ENCODE measurements at regions of chr6 and their contacts with region 1.

Region 1: GRCh38 chr6:27753668-27754407 is 158.4 kb downstream of the OR2B2 start:
- DNase-seq: peak; percentile 65
- H3K4me3 Mint-ChIP-seq: peak overlapping the region; percentile 83
- H3K27ac Mint-ChIP-seq: peak overlapping the region; percentile 69
- H3K4me1 Mint-ChIP-seq: peaks cover 56% of the 10 kb centered on the region
- H3K27me3 Mint-ChIP-seq: peaks cover 2% of the 10 kb centered on the region

Region 2: GRCh38 chr6:27132532-27133280 is 621.1 kb before region 1 on chr6:
- intact Hi-C with region 1: loop called (anchors 2 kb)
- DNase-seq: peak; percentile 92
- H3K4me3 Mint-ChIP-seq: no peak overlapping the region
- H3K27ac Mint-ChIP-seq: no peak overlapping the region
- H3K4me1 Mint-ChIP-seq: peaks cover 34% of the 10 kb centered on the region
- H3K27me3 Mint-ChIP-seq: no peaks in the 10 kb centered on the region

Region 3: GRCh38 chr6:27312146-27312949 is 441.5 kb before region 1 on chr6 and contains the start of gene POM121L2:
- intact Hi-C with region 1: loop called (anchors 1 kb)
- DNase-seq: peak; percentile 41
- H3K4me3 Mint-ChIP-seq: peak within 1 kb of the TSS; percentile 78
- H3K27ac Mint-ChIP-seq: no peak within 1 kb of the TSS
- H3K4me1 Mint-ChIP-seq: peaks cover 7% of the 10 kb centered on the region
- H3K27me3 Mint-ChIP-seq: peaks cover 65% of the 10 kb centered on the region
- total RNA-seq, gene POM121L2: not detected in 2 replicates

Region 4: DNA sequence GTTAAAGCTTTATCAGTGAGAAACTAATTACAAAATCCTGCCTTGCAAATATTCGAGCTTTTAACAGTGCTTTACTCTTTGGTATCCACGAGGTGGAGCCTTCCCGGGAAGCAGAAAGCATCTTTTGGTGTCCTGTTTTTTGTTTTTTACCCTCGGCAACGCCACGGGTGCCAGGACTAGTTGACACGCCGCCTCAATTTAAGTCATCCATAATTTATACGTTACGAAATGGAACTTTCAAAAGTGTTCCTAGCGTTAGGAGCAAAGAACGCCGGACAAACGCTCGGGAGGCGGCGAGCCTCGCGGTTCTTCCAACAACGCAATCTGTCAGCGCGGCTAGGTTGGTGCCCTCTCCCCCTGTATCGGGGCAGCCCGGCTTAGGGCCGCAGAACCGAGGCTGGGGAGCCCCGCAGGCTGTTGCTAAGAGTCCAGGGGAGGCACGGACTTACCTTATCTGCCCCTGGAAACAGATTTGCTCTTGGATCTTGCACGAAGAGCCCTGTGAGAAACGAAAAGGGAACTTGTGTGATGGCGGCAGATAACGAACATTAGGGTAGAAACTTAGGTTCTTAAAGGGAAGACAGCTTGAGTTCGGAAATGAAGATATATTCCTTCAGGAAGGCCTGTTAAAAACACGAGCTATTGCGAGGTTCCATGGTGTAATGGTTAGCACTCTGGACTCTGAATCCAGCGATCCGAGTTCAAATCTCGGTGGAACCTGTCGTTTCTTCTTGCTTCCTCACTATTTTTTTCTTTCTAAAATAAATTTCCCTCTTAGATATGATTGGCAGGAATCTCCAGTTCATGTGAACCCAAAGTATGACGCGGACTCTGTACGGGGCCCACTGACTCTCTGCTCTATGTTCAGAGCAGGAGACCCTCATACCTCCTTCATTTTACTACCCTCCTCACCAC is 234.7 kb before region 1 on chr6:
- intact Hi-C with region 1: loop called (anchors 1 kb)
- DNase-seq: peak; percentile 40
- H3K4me3 Mint-ChIP-seq: peak overlapping the region; percentile 89
- H3K27ac Mint-ChIP-seq: peak overlapping the region; percentile 86
- H3K4me1 Mint-ChIP-seq: peaks cover 16% of the 10 kb centered on the region
- H3K27me3 Mint-ChIP-seq: peaks cover 25% of the 10 kb centered on the region

Region 5: DNA sequence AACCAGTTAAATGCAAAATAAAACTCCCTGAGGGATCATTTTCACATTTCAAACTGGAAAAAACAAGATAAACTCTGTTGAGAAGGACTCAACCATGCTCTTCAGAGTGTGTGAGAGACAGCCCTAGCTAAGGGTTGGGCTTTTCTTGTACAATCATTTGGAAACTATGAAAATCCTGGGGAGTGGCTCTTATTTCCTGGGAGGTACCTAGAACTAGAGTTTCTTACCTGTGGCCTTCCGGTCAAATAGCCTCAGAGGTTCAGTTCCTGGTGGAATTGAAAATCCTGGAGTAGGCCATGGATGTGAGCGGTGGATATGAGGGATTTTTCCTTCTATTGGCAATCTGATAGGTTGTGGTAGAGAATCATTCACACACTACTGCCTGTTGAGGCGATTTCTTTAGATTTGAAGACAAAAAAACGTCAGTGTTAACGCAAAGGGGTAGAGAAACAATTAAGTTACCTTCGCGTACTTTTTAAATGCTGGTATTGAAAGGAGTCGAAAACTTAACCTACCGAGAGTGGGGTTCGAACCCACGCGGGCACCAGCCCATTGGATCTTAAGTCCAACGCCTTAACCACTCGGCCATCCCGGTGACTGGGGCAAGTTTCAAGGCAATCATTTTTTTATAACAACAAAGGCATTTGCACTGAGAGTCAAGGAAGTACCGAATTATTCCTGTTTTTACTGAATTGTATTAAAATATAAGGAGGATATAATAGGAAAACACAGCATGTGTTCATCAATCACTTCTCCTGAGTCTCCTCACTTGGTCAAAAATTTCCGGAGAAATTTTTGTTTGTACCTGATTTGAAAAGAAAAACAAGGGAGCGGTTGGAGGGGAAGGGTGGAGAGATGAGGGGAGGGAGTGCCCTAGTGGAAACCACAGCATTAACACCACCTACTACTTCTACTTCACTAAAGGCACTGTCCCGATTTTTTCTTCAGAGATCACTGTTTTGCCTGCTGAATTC is 32.9 kb before region 1 on chr6:
- intact Hi-C with region 1: no loop called
- DNase-seq: no peak
- H3K4me3 Mint-ChIP-seq: no peak overlapping the region
- H3K27ac Mint-ChIP-seq: no peak overlapping the region
- H3K4me1 Mint-ChIP-seq: peaks cover 29% of the 10 kb centered on the region
- H3K27me3 Mint-ChIP-seq: peaks cover 11% of the 10 kb centered on the region

Region 6: GRCh38 chr6:27795697-27796494 is 42.1 kb after region 1 on chr6:
- intact Hi-C with region 1: loop called (anchors 1 kb)
- DNase-seq: peak; percentile 58
- H3K4me3 Mint-ChIP-seq: no peak overlapping the region
- H3K27ac Mint-ChIP-seq: peak overlapping the region; percentile 65
- H3K4me1 Mint-ChIP-seq: peaks cover 42% of the 10 kb centered on the region
- H3K27me3 Mint-ChIP-seq: peaks cover 12% of the 10 kb centered on the region

Region 7: GRCh38 chr6:28838634-28839442 is 1085.0 kb after region 1 on chr6:
- intact Hi-C with region 1: loop called (anchors 1 kb)
- DNase-seq: peak; percentile 76
- H3K4me3 Mint-ChIP-seq: peak overlapping the region; percentile 96
- H3K27ac Mint-ChIP-seq: peak overlapping the region; percentile 93
- H3K4me1 Mint-ChIP-seq: peaks cover 19% of the 10 kb centered on the region
- H3K27me3 Mint-ChIP-seq: peaks cover 47% of the 10 kb centered on the region